H1 (cell line): ENCODE measurements at regions of chr11 and their contacts with region 1.

Region 1: DNA sequence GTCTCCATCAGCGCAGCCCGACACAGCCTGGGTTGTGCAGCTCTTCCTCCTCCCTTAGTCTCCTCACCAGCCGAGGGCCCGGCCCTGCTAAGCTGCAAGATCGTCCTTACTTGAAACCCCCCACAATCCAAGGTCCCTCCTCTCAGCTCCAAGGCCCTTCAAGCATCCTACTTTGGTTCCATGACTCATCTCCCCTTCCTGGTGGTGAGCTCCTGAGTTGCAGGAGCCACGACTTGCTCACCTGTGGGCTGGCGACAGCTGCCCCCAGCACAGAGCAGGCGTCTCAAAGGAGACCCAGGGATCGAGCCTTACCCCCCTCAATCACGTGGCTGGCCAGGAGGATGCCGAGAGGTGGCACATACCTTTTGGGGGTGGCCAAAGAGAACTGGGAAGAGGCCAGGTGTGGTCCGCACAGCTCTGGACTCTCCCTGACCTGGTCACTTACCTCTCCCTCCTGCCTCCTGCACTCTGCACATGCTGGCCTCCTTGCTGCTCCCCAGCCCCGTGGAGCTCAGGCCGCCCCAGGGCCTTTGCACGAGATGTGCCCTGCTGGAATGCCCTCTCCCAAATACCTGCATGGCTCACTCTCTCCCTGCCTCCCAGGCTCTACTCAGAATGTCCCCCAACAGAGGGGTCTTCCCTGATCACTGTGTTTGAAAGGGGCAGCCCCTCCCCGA is 35.2 kb upstream of the FADD start:
- DNase-seq: no peak
- H3K4me3 ChIP-seq: no peak overlapping the region
- H3K27ac ChIP-seq: no peak overlapping the region
- H3K4me1 ChIP-seq: peaks cover 0 to 2% (median 0%) of the 10 kb centered on the region in 4 experiments; a peak in 2 of 7 replicates
- H3K27me3 ChIP-seq: no peaks in the 10 kb centered on the region; a peak in 1 of 7 replicates
- CTCF ChIP-seq: peak in 2 of 3 experiments; percentile 5 to 7; a peak in 1 of 4 replicates
- EP300 ChIP-seq: no peak
- POLR2A ChIP-seq: no peak
- RAD21 ChIP-seq: no peak; a peak in 1 of 4 replicates

Region 2: GRCh38 chr11:70146895-70147520 is 20.9 kb before region 1 on chr11:
- CTCF ChIA-PET with region 1: interaction called, 11 read pairs
- POLR2A ChIA-PET with region 1: no interaction called
- DNase-seq: no peak
- H3K4me3 ChIP-seq: no peak overlapping the region
- H3K27ac ChIP-seq: no peak overlapping the region
- H3K4me1 ChIP-seq: peaks cover 0 to 25% (median 8%) of the 10 kb centered on the region in 4 experiments; a peak in 5 of 7 replicates
- H3K27me3 ChIP-seq: peaks cover 0 to 18% (median 5%) of the 10 kb centered on the region in 4 experiments; a peak in 5 of 7 replicates
- CTCF ChIP-seq: no peak
- EP300 ChIP-seq: no peak
- POLR2A ChIP-seq: no peak
- RAD21 ChIP-seq: no peak

Region 3: GRCh38 chr11:70183483-70184169 is 15.8 kb after region 1 on chr11:
- CTCF ChIA-PET with region 1: interaction called, 11 read pairs
- POLR2A ChIA-PET with region 1: no interaction called
- DNase-seq: no peak
- H3K4me3 ChIP-seq: no peak overlapping the region
- H3K27ac ChIP-seq: no peak overlapping the region
- H3K4me1 ChIP-seq: no peaks in the 10 kb centered on the region
- H3K27me3 ChIP-seq: no peaks in the 10 kb centered on the region
- CTCF ChIP-seq: no peak
- EP300 ChIP-seq: no peak
- POLR2A ChIP-seq: no peak
- RAD21 ChIP-seq: no peak

Region 4: DNA sequence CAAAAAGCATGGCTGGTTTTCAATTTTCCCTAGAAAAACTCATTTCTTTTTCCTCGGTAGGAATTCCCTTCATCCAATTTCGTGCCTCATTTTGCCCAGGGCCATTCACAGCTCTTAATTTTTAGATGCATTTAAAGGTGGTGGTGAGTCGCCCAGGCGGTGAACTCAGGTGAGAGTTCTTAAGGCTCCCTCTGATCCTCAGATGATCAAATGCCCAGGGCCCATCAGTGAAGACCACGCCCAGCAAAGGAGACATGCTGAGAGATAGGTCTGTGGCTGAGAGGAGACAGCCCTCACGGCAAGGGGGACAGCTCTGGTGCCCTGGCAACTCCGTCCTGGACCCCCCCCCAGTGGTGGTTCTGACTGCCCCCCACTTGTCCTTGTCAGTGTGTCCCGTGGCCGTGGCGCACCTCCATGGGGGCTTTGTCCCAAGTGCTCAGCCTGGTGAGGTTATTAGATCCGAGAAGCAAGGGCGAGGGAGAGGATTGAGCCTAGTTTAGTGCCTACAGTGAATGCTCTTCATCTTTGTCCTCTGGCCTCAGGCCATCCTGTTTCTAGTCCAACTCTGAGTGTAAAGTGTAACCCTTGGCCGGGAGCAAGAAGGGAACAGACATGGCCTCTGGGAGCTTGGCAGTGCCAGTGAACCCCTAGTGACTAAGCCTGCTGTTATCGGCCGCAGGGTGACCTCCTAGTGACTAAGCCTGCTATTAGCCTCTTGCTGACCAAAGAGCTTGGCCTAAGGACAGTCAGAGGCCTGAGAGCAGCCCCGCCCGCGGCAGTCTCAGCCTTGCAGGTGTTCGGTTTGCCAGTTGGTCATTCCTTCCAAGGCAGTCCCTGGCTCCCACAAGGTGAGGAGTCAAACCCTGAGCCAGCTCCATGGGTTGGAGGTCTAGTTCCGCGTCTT is 314.0 kb after region 1 on chr11:
- CTCF ChIA-PET with region 1: no interaction called
- POLR2A ChIA-PET with region 1: no interaction called
- DNase-seq: no peak
- H3K4me3 ChIP-seq: no peak overlapping the region
- H3K27ac ChIP-seq: no peak overlapping the region
- H3K4me1 ChIP-seq: no peaks in the 10 kb centered on the region
- H3K27me3 ChIP-seq: no peaks in the 10 kb centered on the region
- CTCF ChIP-seq: no peak
- EP300 ChIP-seq: no peak
- POLR2A ChIP-seq: no peak
- RAD21 ChIP-seq: no peak